Activated naive CD4-positive, alpha-beta T cell treated with anti-CD3 and anti-CD28 coated beads for 36 hours (primary cell): ENCODE measurements at regions of chr3 and their contacts with region 1.

Region 1: DNA sequence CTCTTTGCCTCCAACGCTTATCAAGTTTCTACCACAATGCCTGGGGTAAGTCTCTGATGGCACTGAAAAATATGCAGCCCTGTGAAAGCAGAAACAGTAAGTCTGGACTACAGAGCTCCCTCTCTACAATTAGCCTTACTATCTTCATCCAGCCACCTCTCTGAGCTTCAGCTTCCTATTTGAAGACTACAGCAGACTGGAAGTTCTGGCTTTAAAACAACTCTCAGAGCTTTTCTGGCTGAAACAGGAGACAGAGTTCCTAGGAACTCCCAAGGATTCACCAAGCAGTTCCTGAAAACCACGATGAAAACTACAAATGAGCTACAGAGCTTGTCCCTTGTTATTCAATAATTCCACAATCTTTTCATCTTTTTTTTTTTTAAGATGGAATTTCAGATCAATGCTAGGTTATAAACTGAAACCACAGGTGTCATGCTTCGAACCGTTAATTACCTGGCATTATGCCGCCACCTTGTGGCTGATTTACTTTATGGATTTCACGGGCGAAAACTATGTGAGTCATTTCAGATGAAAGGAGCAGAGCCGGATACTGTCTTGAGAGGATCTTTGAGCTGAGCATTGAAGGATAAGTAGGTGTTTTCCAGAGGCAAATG is 3.9 kb downstream of the CRYGS start:
- DNase-seq: peak; percentile 95
- H3K4me3 Mint-ChIP-seq: no peak overlapping the region
- H3K27ac Mint-ChIP-seq: peak overlapping the region; percentile 47
- H3K4me1 Mint-ChIP-seq: peaks cover 60% of the 10 kb centered on the region
- H3K27me3 Mint-ChIP-seq: no peaks in the 10 kb centered on the region

Region 2: DNA sequence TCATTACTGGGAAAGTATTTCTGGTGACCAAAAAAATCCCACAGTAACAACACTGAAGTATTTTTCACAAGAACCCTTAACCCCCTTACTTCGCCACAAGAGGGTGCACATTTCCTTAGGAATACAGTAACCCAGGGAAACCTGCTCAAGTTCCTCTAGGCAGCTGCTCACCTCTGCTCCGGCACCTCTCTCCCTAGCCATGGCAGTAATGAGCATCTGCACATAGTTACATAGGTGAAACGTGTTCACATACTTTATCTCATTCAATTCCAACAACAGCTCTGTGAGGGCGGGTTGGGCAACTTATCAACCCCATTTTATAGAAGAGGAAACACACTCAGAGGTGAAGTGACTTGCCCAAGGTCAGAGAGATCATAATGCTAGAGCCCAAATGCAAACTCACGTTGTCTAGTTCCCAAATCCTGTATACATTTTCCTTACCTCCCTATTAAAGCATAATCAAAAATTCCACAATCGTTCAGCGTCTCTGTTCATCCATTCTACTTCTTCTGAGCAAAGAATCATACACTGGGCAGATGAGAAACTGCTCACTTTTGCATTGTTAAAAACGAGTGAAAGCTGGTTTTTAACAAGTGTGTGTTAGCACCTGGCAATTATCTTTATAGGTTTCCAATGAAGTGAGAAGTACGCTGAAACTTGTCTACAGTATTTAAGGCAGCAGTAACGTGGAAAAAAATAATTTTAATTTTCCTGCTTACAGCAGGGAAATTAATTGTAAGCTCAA is 806.2 kb before region 1 on chr3:
- CTCF ChIA-PET with region 1: interaction called, 4 read pairs
- intact Hi-C with region 1: loop called (anchors 10 kb)
- DNase-seq: peak; percentile 50
- H3K4me3 Mint-ChIP-seq: no peak overlapping the region
- H3K27ac Mint-ChIP-seq: no peak overlapping the region
- H3K4me1 Mint-ChIP-seq: no peaks in the 10 kb centered on the region
- H3K27me3 Mint-ChIP-seq: peaks cover 5% of the 10 kb centered on the region

Region 3: GRCh38 chr3:185983495-185984141 is 556.7 kb before region 1 on chr3:
- CTCF ChIA-PET with region 1: interaction called, 41 read pairs
- intact Hi-C with region 1: loop called (anchors 1 kb)
- DNase-seq: peak; percentile 67
- H3K4me3 Mint-ChIP-seq: no peak overlapping the region
- H3K27ac Mint-ChIP-seq: peak overlapping the region; percentile 41
- H3K4me1 Mint-ChIP-seq: peaks cover 3% of the 10 kb centered on the region
- H3K27me3 Mint-ChIP-seq: peaks cover 8% of the 10 kb centered on the region

Region 4: GRCh38 chr3:186241910-186242821 is 298.2 kb before region 1 on chr3:
- CTCF ChIA-PET with region 1: interaction called, 19 read pairs
- intact Hi-C with region 1: loop called (anchors 1 kb)
- DNase-seq: peak; percentile 87
- H3K4me3 Mint-ChIP-seq: peak overlapping the region; percentile 17
- H3K27ac Mint-ChIP-seq: no peak overlapping the region
- H3K4me1 Mint-ChIP-seq: peaks cover 7% of the 10 kb centered on the region
- H3K27me3 Mint-ChIP-seq: peaks cover 7% of the 10 kb centered on the region

Region 5: DNA sequence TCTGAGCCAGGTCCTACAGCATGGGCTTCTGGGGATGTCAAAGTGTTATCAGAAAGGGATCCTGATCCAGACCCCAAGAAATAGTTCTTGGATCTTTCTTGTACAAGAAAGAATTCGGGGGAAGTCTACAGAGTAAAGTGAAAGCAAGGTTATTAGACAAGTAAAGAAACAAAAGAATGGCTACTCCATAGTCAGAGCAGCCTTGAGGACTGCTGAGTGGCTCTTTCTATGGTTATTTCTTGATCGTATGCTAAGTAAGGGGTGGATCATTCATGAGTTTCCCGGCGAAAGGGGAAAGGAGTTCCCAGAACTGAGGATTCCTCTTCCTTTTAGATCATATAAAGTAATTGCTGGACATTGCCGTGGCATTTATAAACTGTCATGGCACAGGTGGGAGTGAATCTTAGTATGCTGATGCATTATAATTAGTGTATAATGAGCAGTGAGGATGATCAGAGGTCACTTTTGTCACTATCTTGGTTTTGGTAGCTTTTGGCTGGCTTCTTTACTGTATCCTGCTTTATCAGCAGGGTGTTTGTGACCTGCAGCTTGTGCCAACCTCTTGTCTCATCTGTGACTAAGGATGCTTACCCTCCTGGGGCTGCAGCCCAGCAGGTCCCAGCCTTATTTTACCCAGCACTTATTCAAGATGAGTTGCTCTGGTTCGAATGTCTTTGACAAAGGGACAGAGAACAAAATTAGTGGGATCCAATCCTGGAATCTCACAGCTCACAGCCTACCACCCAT is 37.2 kb before region 1 on chr3:
- CTCF ChIA-PET with region 1: interaction called, 12 read pairs
- intact Hi-C with region 1: no loop called
- DNase-seq: no peak
- H3K4me3 Mint-ChIP-seq: no peak overlapping the region
- H3K27ac Mint-ChIP-seq: no peak overlapping the region
- H3K4me1 Mint-ChIP-seq: peaks cover 17% of the 10 kb centered on the region
- H3K27me3 Mint-ChIP-seq: no peaks in the 10 kb centered on the region